ENCODE measurements at regions of chr16 and their contacts with region 1.

Region 1: GRCh38 chr16:83958137-83958845 is 5.3 kb downstream of the OSGIN1 start:
- DNase-seq: no peak
- ATAC-seq: no peak
- H3K4me3 ChIP-seq: no peak overlapping the region
- H3K27ac ChIP-seq: peak overlapping the region in 10 of 12 donors; percentile 26 to 82 (median 60)
- H3K4me1 ChIP-seq: peaks cover 0 to 59% (median 26%) of the 10 kb centered on the region in 12 donors
- H3K27me3 ChIP-seq: no peaks in the 10 kb centered on the region
- CTCF ChIP-seq: no peak
- POLR2A ChIP-seq: no peak

Region 2: DNA sequence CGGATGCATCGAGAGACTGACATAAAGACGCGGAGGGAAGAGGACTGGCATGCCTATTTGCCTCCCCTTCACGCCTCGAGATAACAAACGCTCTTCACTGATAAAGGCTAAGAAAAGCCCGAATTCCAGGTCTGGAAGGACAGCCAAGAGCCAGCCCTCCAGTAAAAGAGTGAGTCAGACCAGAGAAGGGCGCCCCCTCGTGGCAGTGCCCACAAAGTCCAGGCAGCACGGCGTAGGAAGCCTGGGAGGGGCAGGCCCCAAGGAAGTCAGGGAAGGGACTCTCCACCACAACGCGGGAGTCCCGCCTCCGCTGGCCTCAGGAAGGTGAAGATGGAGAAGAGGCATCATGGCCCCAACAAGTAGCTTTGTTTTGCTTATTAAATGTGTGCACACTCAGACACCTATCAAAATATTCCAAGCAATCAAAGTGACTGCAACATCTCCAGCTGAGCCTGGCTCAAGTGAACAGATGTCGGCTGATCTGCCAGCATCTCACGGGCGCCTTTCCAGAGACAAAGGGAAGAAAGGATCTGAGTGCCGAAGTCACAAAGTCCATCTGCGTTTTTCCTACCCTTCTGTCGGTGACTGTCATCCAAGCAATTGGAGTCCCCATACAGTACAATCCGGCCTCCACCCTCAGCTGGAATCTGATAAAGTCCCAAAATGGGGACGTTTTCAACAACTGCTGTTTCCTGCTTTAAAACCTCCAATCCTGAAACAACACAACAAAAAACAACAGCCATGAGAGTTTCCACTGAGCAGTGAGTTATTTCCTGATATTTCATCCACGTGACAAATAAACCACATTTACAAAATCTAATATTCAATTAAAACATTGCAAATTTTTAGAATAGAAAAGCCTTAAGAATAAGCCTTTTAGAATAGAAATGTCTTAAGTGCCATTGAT is 104.7 kb after region 1 on chr16:
- intact Hi-C with region 1: loop called in 4 of 10 experiments (anchors 1 to 5 kb)
- DNase-seq: peak; percentile 73 to 85 (median 80)
- ATAC-seq: peak; percentile 60 to 85 (median 85)
- H3K4me3 ChIP-seq: no peak overlapping the region
- H3K27ac ChIP-seq: peak overlapping the region in 5 of 12 donors; percentile 11 to 46 (median 31)
- H3K4me1 ChIP-seq: peaks cover 0 to 24% (median 12%) of the 10 kb centered on the region in 12 donors
- H3K27me3 ChIP-seq: no peaks in the 10 kb centered on the region
- CTCF ChIP-seq: peak; percentile 74 to 93 (median 88)
- POLR2A ChIP-seq: no peak

Measured in heart left ventricle (tissue), 16 donors.